WTC11 (cell line): ENCODE measurements at regions of chr9 and their contacts with region 1.

Region 1: DNA sequence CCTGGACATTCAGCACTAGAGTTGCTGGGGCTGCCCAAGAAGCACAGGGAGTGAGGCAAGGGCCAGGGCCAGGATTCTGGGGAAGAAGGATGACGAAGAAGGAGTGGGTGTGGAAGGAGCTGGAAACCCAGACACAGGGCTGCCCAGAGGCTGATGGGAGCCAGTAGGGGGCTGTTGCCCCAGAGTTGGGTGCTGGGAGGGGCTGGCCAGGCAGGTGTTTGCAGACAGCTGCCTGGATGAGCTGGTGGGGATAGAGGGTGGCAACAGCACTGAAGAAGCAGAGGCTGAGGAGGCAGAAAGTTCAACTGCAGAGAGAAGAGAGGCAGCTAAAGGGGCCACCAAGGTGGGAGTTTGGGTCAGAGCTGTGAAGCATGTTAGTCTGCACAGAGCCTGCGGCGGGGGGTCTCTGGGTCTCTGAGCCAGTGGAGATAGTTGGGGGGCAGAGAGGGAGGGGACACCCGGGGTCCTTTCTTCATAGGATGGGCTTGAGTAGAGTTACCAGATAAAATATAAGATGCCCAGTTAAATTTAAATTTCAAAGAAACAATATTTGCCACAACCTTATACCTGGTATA is 2.5 kb upstream of the AQP7 start:
- DNase-seq: no peak
- ATAC-seq: no peak
- H3K4me3 Mint-ChIP-seq: no peak overlapping the region
- H3K27ac Mint-ChIP-seq: no peak overlapping the region
- H3K4me1 Mint-ChIP-seq: no peaks in the 10 kb centered on the region
- H3K27me3 Mint-ChIP-seq: no peaks in the 10 kb centered on the region; the same call in 1 of the 2 replicates
- CTCF ChIP-seq: no peak

Region 2: DNA sequence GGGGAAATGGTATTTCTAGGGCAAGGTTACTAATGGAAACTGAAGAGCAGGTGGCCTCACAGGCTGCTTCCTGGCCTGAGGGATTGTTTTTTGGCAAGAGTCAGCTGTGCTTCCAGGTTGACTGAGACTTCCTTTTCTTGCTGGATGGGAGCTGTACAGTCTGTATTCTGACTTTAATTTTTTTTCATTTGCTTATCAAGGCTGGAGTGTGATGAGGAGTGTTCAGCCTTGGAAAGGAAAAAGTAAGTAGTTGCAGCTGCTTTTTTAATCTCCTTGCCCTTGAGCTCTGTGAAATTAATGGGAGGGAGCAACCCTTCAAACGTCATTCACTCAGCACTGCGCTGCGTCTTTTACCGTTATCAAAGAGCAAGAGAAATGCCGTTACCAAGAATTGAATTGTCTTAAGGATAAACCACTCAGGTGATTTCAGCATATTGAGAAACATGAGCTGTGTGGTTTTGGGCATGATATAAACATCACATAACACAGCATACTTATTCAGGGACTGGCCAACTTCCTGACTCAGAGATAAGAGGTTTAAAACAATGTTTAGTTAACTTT is 50.1 kb before region 1 on chr9:
- CTCF ChIA-PET with region 1: no interaction called
- POLR2A ChIA-PET with region 1: no interaction called
- DNase-seq: no peak
- ATAC-seq: no peak
- H3K4me3 Mint-ChIP-seq: no peak overlapping the region
- H3K27ac Mint-ChIP-seq: no peak overlapping the region
- H3K4me1 Mint-ChIP-seq: no peaks in the 10 kb centered on the region
- H3K27me3 Mint-ChIP-seq: no peaks in the 10 kb centered on the region
- CTCF ChIP-seq: no peak

Region 3: DNA sequence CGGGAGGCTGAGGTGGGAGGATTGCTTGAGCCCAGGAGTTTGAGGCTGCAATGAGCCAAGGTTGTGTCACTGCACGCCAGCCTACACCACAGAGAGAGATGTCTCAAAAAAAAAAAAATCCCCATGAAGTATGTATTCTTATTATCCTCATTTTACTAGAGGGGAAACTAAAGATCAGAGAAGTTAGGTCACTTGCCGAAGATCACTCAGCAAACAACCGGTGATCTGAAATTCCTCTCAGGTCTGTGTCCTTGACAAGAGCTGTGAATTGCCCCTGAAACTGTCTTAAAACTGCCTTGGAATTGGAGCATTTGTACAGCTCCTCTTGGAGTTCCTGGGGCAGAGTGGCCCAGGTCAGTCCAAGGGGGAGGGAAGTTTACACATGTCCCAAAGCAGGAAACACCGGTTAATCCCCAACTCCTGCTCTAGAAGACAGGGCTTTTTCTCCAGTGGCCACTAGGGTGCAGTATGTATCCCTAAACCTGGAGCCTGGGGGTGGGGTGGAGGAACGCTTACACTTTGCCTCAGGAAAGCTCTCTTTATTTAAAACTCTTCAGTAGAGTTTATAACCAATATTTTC is 30.2 kb before region 1 on chr9:
- CTCF ChIA-PET with region 1: interaction called, 38 read pairs
- POLR2A ChIA-PET with region 1: interaction called, 3 read pairs
- DNase-seq: peak; percentile 81
- ATAC-seq: peak; percentile 87
- H3K4me3 Mint-ChIP-seq: peak overlapping the region; percentile 52
- H3K27ac Mint-ChIP-seq: peak overlapping the region; percentile 65
- H3K4me1 Mint-ChIP-seq: peaks cover 31% of the 10 kb centered on the region
- H3K27me3 Mint-ChIP-seq: no peaks in the 10 kb centered on the region
- CTCF ChIP-seq: peak; percentile 71

Region 4: DNA sequence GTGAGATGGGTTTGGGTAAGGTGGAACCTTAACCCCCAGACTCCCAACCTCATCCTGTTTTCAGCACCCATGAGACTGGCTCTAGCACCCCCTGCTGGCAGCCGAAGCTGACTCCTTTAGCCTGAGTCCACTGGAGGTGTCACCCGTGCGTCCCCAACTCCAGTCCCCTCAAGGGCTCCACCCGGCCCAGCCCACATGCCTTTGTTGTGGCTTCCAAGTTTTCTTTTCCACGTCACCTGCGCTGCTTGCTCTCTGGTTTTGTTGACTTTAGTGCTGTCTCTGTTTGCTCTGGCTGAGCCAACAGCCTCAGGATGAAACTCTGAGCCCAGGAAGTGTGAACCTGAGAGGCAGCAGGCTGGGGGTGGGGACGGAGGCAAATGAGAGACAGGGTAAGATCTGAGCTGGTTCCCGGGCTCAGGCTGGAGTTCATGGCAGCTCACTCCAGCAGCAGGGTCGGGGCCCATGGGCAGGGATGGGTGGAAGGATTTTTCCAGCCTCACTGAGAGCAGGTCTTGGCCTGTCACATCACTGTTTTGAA is 10.7 kb after region 1 on chr9:
- CTCF ChIA-PET with region 1: interaction called, 29 read pairs
- POLR2A ChIA-PET with region 1: no interaction called
- DNase-seq: peak; percentile 88
- ATAC-seq: peak; percentile 95
- H3K4me3 Mint-ChIP-seq: no peak overlapping the region
- H3K27ac Mint-ChIP-seq: no peak overlapping the region
- H3K4me1 Mint-ChIP-seq: peaks cover 7% of the 10 kb centered on the region
- H3K27me3 Mint-ChIP-seq: no peaks in the 10 kb centered on the region
- CTCF ChIP-seq: peak; percentile 51

Region 5: DNA sequence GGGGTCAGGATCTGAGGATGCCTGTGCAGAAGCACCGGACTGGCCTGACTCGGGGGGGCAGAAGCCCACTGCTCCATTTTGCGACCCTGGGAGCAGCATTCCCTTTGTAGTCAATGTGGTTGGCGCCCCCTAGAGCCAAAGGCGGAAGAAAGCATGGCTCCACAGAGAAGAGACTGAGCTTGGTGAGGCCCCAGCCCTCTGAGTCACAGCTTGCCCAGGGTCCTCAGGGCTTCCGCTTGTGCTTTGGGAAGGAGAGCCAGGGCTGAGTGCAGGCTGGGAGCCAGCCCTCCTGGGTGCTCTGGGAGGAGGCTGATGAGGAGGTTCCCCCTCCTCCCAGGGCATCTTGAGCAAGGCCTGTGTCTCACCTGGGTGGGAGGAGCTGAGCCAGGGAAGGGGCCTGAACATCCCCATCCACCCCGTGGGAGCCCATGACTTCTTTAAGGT is 48.0 kb after region 1 on chr9:
- CTCF ChIA-PET with region 1: interaction called, 56 read pairs
- POLR2A ChIA-PET with region 1: no interaction called
- DNase-seq: peak; percentile 88
- ATAC-seq: peak; percentile 97
- H3K4me3 Mint-ChIP-seq: no peak overlapping the region
- H3K27ac Mint-ChIP-seq: no peak overlapping the region; the same call in 1 of the 2 replicates
- H3K4me1 Mint-ChIP-seq: peaks cover 16% of the 10 kb centered on the region
- H3K27me3 Mint-ChIP-seq: peaks cover 10% of the 10 kb centered on the region
- CTCF ChIP-seq: peak; percentile 62

Region 6: DNA sequence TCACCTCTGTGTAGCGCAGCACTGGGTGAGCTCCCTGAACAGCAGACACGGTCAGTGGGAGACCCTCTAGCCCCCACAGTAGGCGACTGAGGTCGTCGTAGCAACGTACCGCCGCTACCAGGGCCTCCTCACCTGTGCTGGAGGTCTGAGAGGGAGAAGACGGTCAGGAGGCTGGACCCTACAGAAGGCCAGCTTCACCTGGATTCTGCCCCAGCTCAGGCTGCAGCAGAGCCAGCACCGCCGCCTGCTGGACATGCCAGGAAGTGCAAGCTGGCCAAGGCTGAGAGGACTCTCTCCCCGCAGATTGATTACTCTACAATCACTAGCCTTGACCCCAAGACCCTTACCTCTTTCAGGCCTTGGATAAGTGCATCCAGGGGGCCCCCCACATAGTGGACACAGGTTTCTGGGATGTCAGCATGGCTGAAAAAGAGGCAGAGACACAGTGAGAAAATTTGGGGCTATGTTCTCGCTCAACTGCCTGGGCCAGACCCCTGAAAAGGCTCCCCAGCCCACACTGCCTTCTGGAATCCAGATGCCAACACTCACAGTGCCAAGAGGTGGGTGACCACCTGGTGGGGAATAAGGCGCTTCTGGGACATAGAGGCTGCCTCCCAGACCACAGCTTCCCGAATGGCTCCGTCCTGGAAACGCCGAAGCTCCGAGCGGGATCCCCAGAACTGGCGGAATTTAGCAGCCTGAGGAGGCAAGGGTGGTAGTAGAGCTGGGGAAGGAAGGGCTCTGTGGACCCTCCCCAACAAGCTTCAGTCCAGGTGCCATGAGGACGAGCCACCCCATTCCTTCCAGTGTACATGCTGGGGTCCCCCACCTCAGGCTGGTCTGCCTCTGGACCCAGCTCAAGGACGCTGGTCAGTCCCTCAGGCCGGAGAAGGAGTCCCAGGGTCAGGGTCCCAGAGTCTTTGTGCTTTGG is 62.0 kb after region 1 on chr9:
- CTCF ChIA-PET with region 1: interaction called, 62 read pairs
- POLR2A ChIA-PET with region 1: no interaction called
- DNase-seq: peak; percentile 88
- ATAC-seq: peak; percentile 93
- H3K4me3 Mint-ChIP-seq: no peak overlapping the region
- H3K27ac Mint-ChIP-seq: no peak overlapping the region
- H3K4me1 Mint-ChIP-seq: no peaks in the 10 kb centered on the region
- H3K27me3 Mint-ChIP-seq: no peaks in the 10 kb centered on the region
- CTCF ChIP-seq: peak; percentile 97

Region 7: GRCh38 chr9:33517373-33517772 is 112.5 kb after region 1 on chr9:
- CTCF ChIA-PET with region 1: interaction called, 10 read pairs
- POLR2A ChIA-PET with region 1: no interaction called
- DNase-seq: no peak
- ATAC-seq: peak; percentile 44
- H3K4me3 Mint-ChIP-seq: no peak overlapping the region
- H3K27ac Mint-ChIP-seq: no peak overlapping the region
- H3K4me1 Mint-ChIP-seq: no peaks in the 10 kb centered on the region
- H3K27me3 Mint-ChIP-seq: peaks cover 14% of the 10 kb centered on the region
- CTCF ChIP-seq: no peak; the same call in 1 of the 2 replicates